PC-9 (cell line): ENCODE measurements at regions of chr9 and their contacts with region 1.

Region 1: DNA sequence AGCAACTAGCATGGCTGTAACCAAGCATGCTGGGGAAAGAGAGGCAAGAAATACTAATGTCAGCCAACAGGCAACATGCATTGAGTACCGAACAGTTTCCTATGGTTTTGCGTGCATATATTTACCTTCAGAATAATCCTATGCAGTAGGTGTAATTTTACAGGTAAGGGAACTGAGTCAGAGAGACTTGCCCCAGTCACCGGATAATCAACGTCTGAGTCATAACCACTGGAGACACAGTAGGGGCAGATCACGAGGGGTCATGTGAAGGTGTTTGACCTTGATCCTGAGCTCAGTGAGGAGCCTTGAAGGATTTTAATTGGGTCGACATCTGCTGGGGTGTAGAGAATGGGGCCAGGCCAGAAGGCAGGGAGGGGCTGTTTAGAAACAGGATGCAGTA is 13.4 kb upstream of the TSC1 start:
- DNase-seq: no peak
- H3K4me3 ChIP-seq: no peak overlapping the region
- H3K27ac ChIP-seq: no peak overlapping the region
- H3K4me1 ChIP-seq: no peaks in the 10 kb centered on the region
- H3K27me3 ChIP-seq: no peaks in the 10 kb centered on the region
- CTCF ChIP-seq: no peak

Region 2: DNA sequence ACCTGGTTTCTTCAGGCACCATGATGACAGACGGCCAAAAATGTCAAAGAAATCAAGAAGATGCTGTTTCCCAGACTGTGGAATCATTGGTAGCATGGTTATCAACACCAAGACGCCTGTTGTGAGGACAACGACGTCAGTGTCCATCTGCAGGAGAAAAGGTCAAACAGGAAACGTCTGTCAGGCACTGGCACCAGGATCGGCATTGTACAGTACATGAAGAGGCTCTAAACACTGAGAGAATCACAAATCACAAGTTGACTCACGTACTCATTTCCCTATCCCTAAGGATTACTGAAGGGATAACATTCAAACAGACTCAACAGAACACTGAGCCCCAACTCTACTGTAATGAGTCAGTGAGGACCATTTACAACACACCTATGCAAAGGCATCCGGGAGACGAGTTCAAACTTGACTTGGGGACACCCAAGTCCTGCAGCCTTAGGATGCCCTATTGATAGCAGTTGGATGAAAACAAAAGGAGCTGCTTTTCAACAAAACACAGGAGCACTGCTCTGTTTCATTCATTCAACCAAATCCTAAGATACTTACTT is 34.4 kb before region 1 on chr9:
- CTCF ChIA-PET with region 1: no interaction called
- POLR2A ChIA-PET with region 1: interaction called, 10 read pairs
- intact Hi-C with region 1: no loop called
- DNase-seq: no peak
- H3K4me3 ChIP-seq: no peak overlapping the region
- H3K27ac ChIP-seq: no peak overlapping the region
- H3K4me1 ChIP-seq: no peaks in the 10 kb centered on the region
- H3K27me3 ChIP-seq: no peaks in the 10 kb centered on the region
- CTCF ChIP-seq: no peak